Gastrocnemius medialis (tissue), 4 donors: ENCODE measurements at regions of chr2 and their contacts with region 1.

Region 1: GRCh38 chr2:37414470-37414949 is 70.1 kb downstream of the QPCT start:
- DNase-seq: no peak
- ATAC-seq: peak; percentile 86 to 94
- H3K4me3 ChIP-seq: no peak overlapping the region
- H3K27ac ChIP-seq: no peak overlapping the region
- H3K4me1 ChIP-seq: peaks cover 5 to 12% of the 10 kb centered on the region in 2 donors
- H3K27me3 ChIP-seq: no peaks in the 10 kb centered on the region
- CTCF ChIP-seq: peak; percentile 78 to 98 (median 85)
- POLR2A ChIP-seq: no peak

Region 2: GRCh38 chr2:37537316-37537715 is 122.8 kb after region 1 on chr2:
- in situ Hi-C with region 1: loop called in 1 of 4 experiments (anchors 10 kb)
- intact Hi-C with region 1: loop called (anchors 2 kb)
- DNase-seq: no peak
- ATAC-seq: no peak
- H3K4me3 ChIP-seq: no peak overlapping the region
- H3K27ac ChIP-seq: no peak overlapping the region
- H3K4me1 ChIP-seq: no peaks in the 10 kb centered on the region
- H3K27me3 ChIP-seq: no peaks in the 10 kb centered on the region
- CTCF ChIP-seq: no peak
- POLR2A ChIP-seq: no peak

Region 3: GRCh38 chr2:37672104-37672869 is 257.8 kb after region 1 on chr2:
- in situ Hi-C with region 1: loop called in 2 of 4 experiments (anchors 25 kb)
- intact Hi-C with region 1: loop called (anchors 1 kb)
- DNase-seq: peak; percentile 73 to 92
- ATAC-seq: peak; percentile 75 to 82
- H3K4me3 ChIP-seq: peak overlapping the region; percentile 81 to 99 (median 95)
- H3K27ac ChIP-seq: peak overlapping the region; percentile 98 to 100 (median 100)
- H3K4me1 ChIP-seq: peaks cover 29 to 42% of the 10 kb centered on the region in 2 donors
- H3K27me3 ChIP-seq: no peaks in the 10 kb centered on the region
- CTCF ChIP-seq: peak in 4 of 5 experiments; percentile 6 to 26 (median 16)
- POLR2A ChIP-seq: peak; percentile 79 to 80

Region 4: GRCh38 chr2:37832590-37833197 is 418.2 kb after region 1 on chr2:
- in situ Hi-C with region 1: loop called in 3 of 4 experiments (anchors 5 kb)
- intact Hi-C with region 1: loop called (anchors 1 kb)
- DNase-seq: peak; percentile 74 to 83
- ATAC-seq: peak; percentile 90 to 91
- H3K4me3 ChIP-seq: no peak overlapping the region
- H3K27ac ChIP-seq: no peak overlapping the region
- H3K4me1 ChIP-seq: peaks cover 10 to 15% of the 10 kb centered on the region in 2 donors
- H3K27me3 ChIP-seq: no peaks in the 10 kb centered on the region
- CTCF ChIP-seq: peak; percentile 80 to 88 (median 86)
- POLR2A ChIP-seq: no peak

Region 5: GRCh38 chr2:37877457-37878315 is 463.2 kb after region 1 on chr2:
- in situ Hi-C with region 1: no loop called
- intact Hi-C with region 1: loop called (anchors 1 kb)
- DNase-seq: no peak
- ATAC-seq: peak; percentile 77 to 95
- H3K4me3 ChIP-seq: no peak overlapping the region
- H3K27ac ChIP-seq: no peak overlapping the region
- H3K4me1 ChIP-seq: peaks cover 0 to 6% of the 10 kb centered on the region in 2 donors
- H3K27me3 ChIP-seq: no peaks in the 10 kb centered on the region
- CTCF ChIP-seq: peak; percentile 67 to 83 (median 71)
- POLR2A ChIP-seq: no peak